ENCODE measurements at regions of chr12 and their contacts with region 1.

Region 1: GRCh38 chr12:118103604-118104382 is at the start of gene VSIG10:
- DNase-seq: peak; percentile 88
- H3K4me3 ChIP-seq: peak within 1 kb of the TSS; percentile 12 to 98 (median 70)
- H3K27ac ChIP-seq: peak within 1 kb of the TSS; percentile 76 to 96 (median 87)
- H3K4me1 ChIP-seq: peaks cover 15 to 17% of the 10 kb centered on the region in 2 donors
- H3K27me3 ChIP-seq: no peaks in the 10 kb centered on the region
- CTCF ChIP-seq: no peak
- POLR2A ChIP-seq: peak; percentile 67 to 98
- total RNA-seq, gene VSIG10: 62.0 to 93.7 (median 76.6) TPM

Region 2: DNA sequence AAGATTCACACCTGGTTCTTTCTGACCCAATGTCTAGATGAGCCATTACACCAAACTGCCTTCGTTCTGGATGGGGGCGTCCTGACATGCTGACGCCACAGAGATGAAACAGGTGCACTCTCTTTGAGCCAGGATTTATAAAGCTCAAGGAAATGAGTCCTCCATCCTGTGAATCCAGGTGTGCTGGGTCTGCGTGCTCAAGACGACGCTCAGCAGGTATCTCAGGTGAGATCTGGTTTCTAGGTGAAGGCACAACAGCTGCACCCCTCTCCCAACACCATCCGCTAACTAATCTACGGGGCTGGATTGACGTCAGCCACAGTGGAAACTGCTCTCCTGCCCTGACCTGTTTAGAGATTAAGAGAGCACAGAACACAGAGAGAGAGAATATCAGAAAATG is 196.6 kb before region 1 on chr12:
- intact Hi-C with region 1: no loop called
- DNase-seq: no peak
- H3K4me3 ChIP-seq: no peak overlapping the region
- H3K27ac ChIP-seq: no peak overlapping the region
- H3K4me1 ChIP-seq: no peaks in the 10 kb centered on the region
- H3K27me3 ChIP-seq: no peaks in the 10 kb centered on the region
- CTCF ChIP-seq: no peak
- POLR2A ChIP-seq: no peak

Region 3: DNA sequence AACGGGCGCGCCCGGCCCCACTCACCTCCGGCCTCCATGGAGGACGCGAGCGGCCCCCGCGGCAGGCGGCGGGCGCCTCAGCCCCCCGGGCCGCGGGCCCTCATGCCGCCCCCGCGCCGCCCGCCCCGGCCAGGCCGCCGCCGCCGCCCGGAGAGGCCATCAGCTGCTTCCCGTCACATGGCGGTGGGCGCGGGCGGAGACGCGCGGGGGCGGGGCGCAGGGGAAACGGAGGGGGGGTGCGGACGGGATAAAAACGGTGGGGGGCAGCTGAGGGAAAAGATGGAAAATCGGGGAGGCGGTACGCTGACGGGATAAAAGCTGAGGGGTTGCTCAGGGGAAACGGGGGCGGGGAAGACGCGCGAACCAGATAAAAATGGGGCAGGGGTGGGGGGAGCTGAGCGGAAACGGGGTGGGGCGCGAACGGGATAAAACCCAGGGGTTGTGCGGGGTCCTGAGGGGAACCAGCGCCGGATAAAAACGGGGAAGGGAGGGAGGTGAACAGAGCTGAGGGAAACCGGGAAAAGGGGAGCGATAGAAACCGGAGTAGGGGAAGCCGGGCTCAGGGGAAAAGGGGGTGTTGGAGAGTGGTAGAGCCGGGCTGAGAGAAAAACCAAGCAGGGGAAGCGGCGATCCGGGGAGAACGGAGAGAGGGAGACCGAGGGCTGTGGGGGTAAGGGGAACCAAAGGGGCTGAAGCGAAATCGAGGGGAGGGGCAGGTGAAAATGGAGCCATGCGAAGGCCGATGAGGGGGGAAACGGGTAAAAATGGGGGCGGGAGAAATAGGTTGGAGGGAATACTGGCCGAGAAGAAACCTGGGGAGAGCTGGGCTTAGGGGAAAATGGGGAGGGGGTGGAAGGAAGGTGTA is 42.5 kb before region 1 on chr12 and contains the start of gene WSB2:
- intact Hi-C with region 1: loop called (anchors 5 kb)
- DNase-seq: peak; percentile 79 to 83
- H3K4me3 ChIP-seq: peak within 1 kb of the TSS; percentile 17 to 84 (median 76)
- H3K27ac ChIP-seq: peak within 1 kb of the TSS; percentile 95 to 98 (median 97)
- H3K4me1 ChIP-seq: peaks cover 29 to 33% of the 10 kb centered on the region in 2 donors
- H3K27me3 ChIP-seq: no peaks in the 10 kb centered on the region
- CTCF ChIP-seq: no peak
- POLR2A ChIP-seq: peak in 1 of 2 donors; percentile 43
- total RNA-seq, gene WSB2: 64.6 to 97.0 (median 86.0) TPM